PC-9 (cell line): ENCODE measurements at regions of chr6 and their contacts with region 1.

Region 1: DNA sequence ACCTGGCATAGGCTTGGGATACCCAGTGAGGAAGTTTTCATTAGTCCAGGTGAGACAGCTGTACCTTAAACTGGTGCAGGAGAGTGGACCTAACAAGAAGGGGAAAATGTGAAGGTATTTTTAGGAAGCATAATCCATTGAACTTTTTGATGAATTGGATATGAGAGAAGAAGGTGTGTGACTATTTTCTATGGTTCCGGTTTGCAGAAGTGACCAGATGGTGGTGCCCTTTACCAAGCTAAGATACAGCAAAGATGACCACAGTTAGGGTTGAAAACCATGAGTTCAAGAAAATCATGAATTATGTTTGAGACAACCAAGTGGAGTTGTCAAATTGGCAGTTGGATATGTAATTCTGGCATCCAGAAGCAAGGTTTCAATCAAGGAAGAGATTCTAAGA is 61.9 kb upstream of the NRSN1 start:
- DNase-seq: no peak
- H3K4me3 ChIP-seq: no peak overlapping the region
- H3K27ac ChIP-seq: no peak overlapping the region
- H3K4me1 ChIP-seq: no peaks in the 10 kb centered on the region
- H3K27me3 ChIP-seq: no peaks in the 10 kb centered on the region
- CTCF ChIP-seq: peak; percentile 62

Region 2: GRCh38 chr6:23728346-23729106 is 335.6 kb before region 1 on chr6:
- CTCF ChIA-PET with region 1: no interaction called
- POLR2A ChIA-PET with region 1: no interaction called
- intact Hi-C with region 1: no loop called
- DNase-seq: no peak
- H3K4me3 ChIP-seq: no peak overlapping the region
- H3K27ac ChIP-seq: no peak overlapping the region
- H3K4me1 ChIP-seq: no peaks in the 10 kb centered on the region
- H3K27me3 ChIP-seq: no peaks in the 10 kb centered on the region
- CTCF ChIP-seq: no peak

Region 3: GRCh38 chr6:24004103-24005064 is 59.7 kb before region 1 on chr6:
- CTCF ChIA-PET with region 1: no interaction called
- POLR2A ChIA-PET with region 1: no interaction called
- intact Hi-C with region 1: no loop called
- DNase-seq: no peak
- H3K4me3 ChIP-seq: no peak overlapping the region
- H3K27ac ChIP-seq: no peak overlapping the region
- H3K4me1 ChIP-seq: no peaks in the 10 kb centered on the region
- H3K27me3 ChIP-seq: no peaks in the 10 kb centered on the region
- CTCF ChIP-seq: no peak

Region 4: DNA sequence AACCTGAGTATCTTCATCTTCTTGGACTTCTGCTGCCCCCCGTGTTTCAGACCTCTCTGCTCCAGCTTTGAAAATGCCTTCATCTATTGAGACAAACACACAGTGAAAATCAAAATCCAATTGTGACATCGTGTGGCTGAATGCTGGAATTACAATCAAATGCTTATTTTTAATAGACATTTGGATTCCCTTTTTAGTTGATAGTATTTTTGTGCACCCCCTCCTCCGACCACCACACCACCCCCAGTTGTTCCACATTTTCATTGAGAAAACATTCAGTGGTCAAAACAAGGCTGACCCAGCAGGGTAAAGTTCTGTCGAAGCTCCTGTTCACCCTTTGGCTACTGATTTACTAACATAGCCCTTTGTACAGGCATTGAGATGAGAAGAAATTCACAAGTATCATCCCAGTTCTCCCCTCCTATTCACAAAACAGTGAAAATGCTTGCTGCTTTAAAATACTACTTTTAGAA is 141.0 kb after region 1 on chr6:
- CTCF ChIA-PET with region 1: no interaction called
- POLR2A ChIA-PET with region 1: no interaction called
- intact Hi-C with region 1: loop called (anchors 10 kb)
- DNase-seq: peak in 1 of 2 experiments; percentile 7
- H3K4me3 ChIP-seq: no peak overlapping the region
- H3K27ac ChIP-seq: no peak overlapping the region
- H3K4me1 ChIP-seq: no peaks in the 10 kb centered on the region
- H3K27me3 ChIP-seq: no peaks in the 10 kb centered on the region
- CTCF ChIP-seq: peak; percentile 75

Region 5: DNA sequence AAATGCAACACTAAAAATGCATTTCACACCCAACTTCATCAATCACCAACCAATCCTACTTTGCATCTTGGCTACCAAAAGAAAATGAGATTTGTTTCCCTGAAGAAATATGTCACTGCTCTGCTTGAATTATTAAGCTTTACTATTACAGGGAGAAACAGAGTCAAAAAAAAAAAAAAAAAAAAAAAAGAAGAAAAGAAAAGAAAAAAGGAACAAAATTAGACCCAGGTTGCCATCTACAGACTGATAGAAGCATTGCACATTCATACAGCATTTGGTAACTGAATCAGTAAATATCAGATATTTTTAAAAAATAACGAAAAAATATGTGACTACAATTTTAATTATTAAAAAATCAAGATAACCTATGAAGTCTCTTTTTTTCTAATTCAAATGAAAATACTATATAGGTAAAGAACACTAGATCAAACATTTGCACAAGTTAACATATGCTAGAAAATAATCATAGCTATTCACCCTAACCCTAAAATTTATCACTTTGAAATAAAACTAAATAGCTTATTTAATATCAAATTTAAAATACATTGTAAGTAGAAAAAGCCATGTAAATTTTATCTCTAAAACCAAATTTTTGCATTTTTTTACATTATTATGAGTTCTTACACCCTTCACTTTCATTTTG is 210.5 kb after region 1 on chr6:
- CTCF ChIA-PET with region 1: no interaction called
- POLR2A ChIA-PET with region 1: no interaction called
- intact Hi-C with region 1: loop called (anchors 2 kb)
- DNase-seq: no peak
- H3K4me3 ChIP-seq: no peak overlapping the region
- H3K27ac ChIP-seq: no peak overlapping the region
- H3K4me1 ChIP-seq: no peaks in the 10 kb centered on the region
- H3K27me3 ChIP-seq: no peaks in the 10 kb centered on the region
- CTCF ChIP-seq: peak; percentile 70

Region 6: GRCh38 chr6:25576919-25577318 is 1512.8 kb after region 1 on chr6:
- CTCF ChIA-PET with region 1: no interaction called
- POLR2A ChIA-PET with region 1: no interaction called
- intact Hi-C with region 1: loop called (anchors 10 kb)
- DNase-seq: no peak
- H3K4me3 ChIP-seq: no peak overlapping the region
- H3K27ac ChIP-seq: no peak overlapping the region
- H3K4me1 ChIP-seq: no peaks in the 10 kb centered on the region
- H3K27me3 ChIP-seq: no peaks in the 10 kb centered on the region
- CTCF ChIP-seq: no peak